CD4-positive, alpha-beta memory T cell (primary cell): ENCODE measurements at regions of chr17 and their contacts with region 1.

Region 1: DNA sequence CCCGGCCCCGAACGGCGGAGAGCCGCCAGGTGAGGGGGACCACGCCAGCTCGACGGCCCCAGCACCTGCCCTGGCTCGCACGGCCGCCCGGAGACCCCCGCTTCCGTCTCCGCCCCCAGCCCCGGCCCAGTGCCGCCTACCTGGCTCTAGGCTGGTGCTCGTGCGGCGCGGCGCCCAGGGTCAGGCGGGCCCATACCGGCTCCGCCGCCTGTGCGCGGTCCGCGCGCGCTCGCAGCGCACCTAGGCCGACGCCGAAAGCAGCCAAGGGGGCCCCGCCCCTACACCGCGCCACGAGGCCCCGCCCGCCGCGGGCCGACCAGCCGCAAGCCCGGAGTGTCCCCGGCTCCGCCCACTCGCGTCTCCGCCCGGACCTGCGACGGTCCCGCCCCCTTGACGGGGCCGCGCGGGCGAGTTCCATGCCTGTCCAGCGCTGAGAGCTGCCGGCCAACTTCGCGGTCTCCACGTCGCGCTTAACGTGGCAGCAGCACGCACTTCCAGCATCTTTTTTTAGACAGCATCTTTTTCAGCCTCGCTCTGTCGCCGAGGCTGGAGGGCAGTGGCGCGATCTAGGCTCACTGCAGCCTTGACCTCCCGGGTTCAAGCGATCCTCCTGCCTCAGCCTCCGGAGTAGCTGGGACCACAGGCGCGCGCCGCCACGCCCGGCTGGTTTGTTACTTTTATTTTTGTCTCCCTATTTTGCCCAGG is at the start of gene SLC25A39:
- DNase-seq: peak; percentile 88 to 98 (median 94)
- H3K4me3 ChIP-seq: peak within 1 kb of the TSS; percentile 47 to 76
- H3K4me3 Mint-ChIP-seq: peak within 1 kb of the TSS; percentile 91 to 96 (median 92)
- H3K27ac ChIP-seq: peak within 1 kb of the TSS; percentile 91
- H3K27ac Mint-ChIP-seq: peak within 1 kb of the TSS; percentile 97 to 99 (median 98)
- H3K4me1 ChIP-seq: peaks cover 13% of the 10 kb centered on the region
- H3K4me1 Mint-ChIP-seq: peaks cover 7 to 41% (median 23%) of the 10 kb centered on the region in 4 donors
- H3K27me3 ChIP-seq: no peaks in the 10 kb centered on the region
- H3K27me3 Mint-ChIP-seq: no peaks in the 10 kb centered on the region
- total RNA-seq, gene SLC25A39: 91.2 to 94.4 TPM

Region 2: DNA sequence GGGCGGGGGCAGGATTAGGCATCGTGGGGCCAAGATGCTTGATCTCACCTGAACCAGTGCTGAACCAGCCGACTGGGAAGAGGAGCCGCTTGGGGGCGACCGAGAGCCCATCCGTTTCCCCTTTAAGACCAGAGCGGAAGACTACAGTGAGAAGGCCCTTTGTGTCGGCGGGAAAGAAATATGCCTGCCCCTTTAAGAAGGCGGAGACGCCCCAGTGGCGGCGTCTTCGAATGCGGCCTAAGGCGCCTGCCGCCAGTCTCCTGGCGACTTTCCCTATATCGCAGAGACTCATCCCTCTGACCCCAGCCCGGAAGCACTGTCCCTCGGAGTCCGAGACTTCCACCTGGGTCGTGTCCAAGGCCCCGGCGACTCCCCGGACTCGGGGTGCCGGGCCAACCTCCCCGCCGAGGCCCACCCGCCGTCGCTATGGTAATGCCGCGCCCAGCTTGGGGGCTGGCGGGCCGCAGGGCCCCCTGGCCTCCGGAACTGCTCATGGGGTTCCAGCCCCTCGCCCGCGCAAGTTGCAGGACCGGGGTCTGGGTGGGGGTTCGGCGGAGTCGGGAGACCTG is 182.9 kb before region 1 on chr17 and contains the start of gene HROB:
- CTCF ChIA-PET with region 1: no interaction called
- POLR2A ChIA-PET with region 1: no interaction called
- intact Hi-C with region 1: loop called (anchors 1 kb)
- DNase-seq: peak; percentile 96 to 99 (median 97)
- H3K4me3 ChIP-seq: peak within 1 kb of the TSS; percentile 66 to 69
- H3K4me3 Mint-ChIP-seq: peak within 1 kb of the TSS; percentile 77 to 94 (median 84)
- H3K27ac ChIP-seq: peak within 1 kb of the TSS; percentile 79
- H3K27ac Mint-ChIP-seq: peak within 1 kb of the TSS; percentile 88 to 95 (median 90)
- H3K4me1 ChIP-seq: peaks cover 14% of the 10 kb centered on the region
- H3K4me1 Mint-ChIP-seq: peaks cover 2 to 19% (median 10%) of the 10 kb centered on the region in 4 donors
- H3K27me3 ChIP-seq: no peaks in the 10 kb centered on the region
- H3K27me3 Mint-ChIP-seq: peaks cover 7% of the 10 kb centered on the region in 2 donors
- total RNA-seq, gene HROB: 0.36 to 0.64 TPM

Region 3: GRCh38 chr17:44186307-44187130 is 138.2 kb before region 1 on chr17 and contains the start of gene TMUB2:
- CTCF ChIA-PET with region 1: interaction called, 4 read pairs
- POLR2A ChIA-PET with region 1: interaction called, 43 read pairs
- intact Hi-C with region 1: loop called (anchors 1 kb)
- DNase-seq: peak; percentile 99 to 100 (median 99)
- H3K4me3 ChIP-seq: peak within 1 kb of the TSS; percentile 96 to 98
- H3K4me3 Mint-ChIP-seq: peak within 1 kb of the TSS; percentile 97 to 100 (median 99)
- H3K27ac ChIP-seq: peak within 1 kb of the TSS; percentile 98
- H3K27ac Mint-ChIP-seq: peak within 1 kb of the TSS; percentile 96 to 100 (median 100)
- H3K4me1 ChIP-seq: peaks cover 44% of the 10 kb centered on the region
- H3K4me1 Mint-ChIP-seq: peaks cover 34 to 67% (median 51%) of the 10 kb centered on the region in 4 donors
- H3K27me3 ChIP-seq: no peaks in the 10 kb centered on the region
- H3K27me3 Mint-ChIP-seq: no peaks in the 10 kb centered on the region
- total RNA-seq, gene TMUB2: 45.4 to 47.9 TPM

Region 4: DNA sequence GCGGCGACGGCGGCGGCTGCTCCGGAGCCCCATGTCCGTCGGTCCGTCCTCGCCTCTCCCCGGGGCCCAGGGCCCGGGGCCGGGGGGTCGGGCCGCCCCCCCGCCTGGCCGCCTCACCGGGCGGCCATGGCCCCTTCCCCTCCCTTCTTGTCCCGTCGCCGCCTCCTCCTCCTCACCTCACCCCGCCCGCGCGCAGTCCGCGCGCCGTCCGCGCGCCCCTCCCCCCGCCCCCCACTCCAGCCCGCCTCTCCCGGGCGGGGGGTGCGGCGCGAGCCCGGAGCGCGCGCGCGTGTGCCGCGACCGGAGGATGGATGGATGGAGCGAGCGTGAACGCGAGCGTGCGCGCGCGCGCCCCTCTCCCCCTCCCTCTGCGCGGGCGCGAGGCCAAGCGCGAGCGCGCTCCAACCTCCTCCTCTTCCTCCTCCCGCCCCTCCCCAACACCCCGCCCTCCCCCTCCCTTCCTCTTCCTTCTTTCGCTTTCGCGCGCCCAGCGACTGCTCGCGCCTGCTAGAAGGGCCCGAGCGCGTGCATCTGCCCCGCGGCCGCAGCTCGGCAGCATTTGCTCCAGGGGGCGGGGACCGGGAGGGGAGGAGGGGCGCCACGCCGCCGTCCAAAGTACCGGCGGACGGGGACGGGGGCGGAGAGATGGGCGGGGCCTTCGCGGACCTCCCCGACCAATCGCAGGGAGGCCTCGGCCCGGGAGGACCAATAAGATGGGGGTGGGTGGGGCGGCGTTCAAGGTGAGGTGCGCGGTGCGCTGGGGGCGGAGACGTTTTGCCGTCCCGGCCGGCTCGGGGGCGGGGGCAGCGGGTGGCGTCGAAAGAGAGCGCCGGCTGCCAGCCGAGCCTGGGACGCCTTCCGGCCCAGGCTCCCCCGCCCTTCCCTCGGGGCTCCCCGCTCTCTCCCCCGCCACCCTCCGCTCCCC is 124.9 kb before region 1 on chr17 and contains the start of gene ATXN7L3:
- CTCF ChIA-PET with region 1: interaction called, 10 read pairs
- POLR2A ChIA-PET with region 1: interaction called, 36 read pairs
- intact Hi-C with region 1: loop called (anchors 1 kb)
- DNase-seq: peak; percentile 96 to 99 (median 98)
- H3K4me3 ChIP-seq: peak within 1 kb of the TSS; percentile 82 to 88
- H3K4me3 Mint-ChIP-seq: peak within 1 kb of the TSS; percentile 90 to 94 (median 92)
- H3K27ac ChIP-seq: peak within 1 kb of the TSS; percentile 82
- H3K27ac Mint-ChIP-seq: peak within 1 kb of the TSS; percentile 89 to 98 (median 96)
- H3K4me1 ChIP-seq: peaks cover 43% of the 10 kb centered on the region
- H3K4me1 Mint-ChIP-seq: peaks cover 30 to 58% (median 40%) of the 10 kb centered on the region in 4 donors
- H3K27me3 ChIP-seq: no peaks in the 10 kb centered on the region
- H3K27me3 Mint-ChIP-seq: no peaks in the 10 kb centered on the region
- total RNA-seq, gene ATXN7L3: 123 to 128 TPM

Region 5: DNA sequence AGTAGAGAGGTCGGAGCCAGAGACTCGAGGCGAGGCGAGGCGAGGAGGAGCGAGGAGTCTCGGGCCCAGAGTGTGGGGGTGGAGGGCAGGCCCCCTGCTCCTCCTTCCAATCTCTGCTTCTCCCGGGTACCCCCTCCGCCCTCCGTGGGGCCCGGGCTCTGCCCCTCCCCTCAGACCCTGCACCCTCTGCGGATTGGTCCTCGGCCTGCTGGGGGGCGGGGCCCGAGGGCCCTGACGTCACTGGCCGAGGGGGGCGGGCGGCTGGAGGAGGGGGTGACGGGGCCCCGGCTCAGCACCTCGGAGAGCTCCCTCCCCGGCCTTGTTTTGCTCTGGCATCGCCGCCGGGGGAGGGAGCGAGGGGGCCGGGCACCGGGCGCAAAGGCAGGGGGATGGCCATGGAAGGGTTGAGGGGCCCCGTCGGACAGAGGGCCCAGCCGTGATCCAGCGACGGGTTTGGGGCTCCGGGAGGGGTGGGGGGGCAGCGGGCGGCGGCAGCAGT is 16.4 kb before region 1 on chr17 and contains the start of gene RUNDC3A:
- CTCF ChIA-PET with region 1: interaction called, 11 read pairs
- POLR2A ChIA-PET with region 1: interaction called, 10 read pairs
- intact Hi-C with region 1: loop called (anchors 1 kb)
- DNase-seq: peak; percentile 81 to 85 (median 82)
- H3K4me3 ChIP-seq: no peak within 1 kb of the TSS
- H3K4me3 Mint-ChIP-seq: peak within 1 kb of the TSS; percentile 19 to 80 (median 58)
- H3K27ac ChIP-seq: no peak within 1 kb of the TSS
- H3K27ac Mint-ChIP-seq: peak within 1 kb of the TSS in 2 of 7 donors; percentile 43 to 50
- H3K4me1 ChIP-seq: peaks cover 16% of the 10 kb centered on the region
- H3K4me1 Mint-ChIP-seq: peaks cover 0 to 26% (median 19%) of the 10 kb centered on the region in 4 donors
- H3K27me3 ChIP-seq: peaks cover 3% of the 10 kb centered on the region
- H3K27me3 Mint-ChIP-seq: peaks cover 10 to 32% of the 10 kb centered on the region in 2 donors
- total RNA-seq, gene RUNDC3A: 0.19 TPM in 1 of 2 experiments, not detected in the other

Region 6: GRCh38 chr17:44344939-44345453 is 20.3 kb after region 1 on chr17 and contains the start of gene GRN:
- CTCF ChIA-PET with region 1: interaction called, 32 read pairs
- POLR2A ChIA-PET with region 1: interaction called, 22 read pairs
- intact Hi-C with region 1: no loop called
- DNase-seq: peak; percentile 81 to 87 (median 84)
- H3K4me3 ChIP-seq: peak within 1 kb of the TSS; percentile 90 to 97
- H3K4me3 Mint-ChIP-seq: peak within 1 kb of the TSS; percentile 90 to 97 (median 92)
- H3K27ac ChIP-seq: peak within 1 kb of the TSS; percentile 57
- H3K27ac Mint-ChIP-seq: peak within 1 kb of the TSS; percentile 69 to 88 (median 82)
- H3K4me1 ChIP-seq: peaks cover 10% of the 10 kb centered on the region
- H3K4me1 Mint-ChIP-seq: peaks cover 10 to 31% (median 19%) of the 10 kb centered on the region in 4 donors
- H3K27me3 ChIP-seq: no peaks in the 10 kb centered on the region
- H3K27me3 Mint-ChIP-seq: peaks cover 0 to 6% of the 10 kb centered on the region in 2 donors
- total RNA-seq, gene GRN: 49.5 to 50.0 TPM

Region 7: GRCh38 chr17:44350733-44351226 is 26.1 kb after region 1 on chr17:
- CTCF ChIA-PET with region 1: interaction called, 32 read pairs
- POLR2A ChIA-PET with region 1: interaction called, 22 read pairs
- intact Hi-C with region 1: no loop called
- DNase-seq: peak in 4 of 5 donors; percentile 63 to 70 (median 64)
- H3K4me3 ChIP-seq: no peak overlapping the region
- H3K4me3 Mint-ChIP-seq: peak overlapping the region in 1 of 8 donors; percentile 46
- H3K27ac ChIP-seq: no peak overlapping the region
- H3K27ac Mint-ChIP-seq: peak overlapping the region in 1 of 7 donors; percentile 51
- H3K4me1 ChIP-seq: peaks cover 7% of the 10 kb centered on the region
- H3K4me1 Mint-ChIP-seq: peaks cover 9 to 19% (median 13%) of the 10 kb centered on the region in 4 donors
- H3K27me3 ChIP-seq: no peaks in the 10 kb centered on the region
- H3K27me3 Mint-ChIP-seq: no peaks in the 10 kb centered on the region